ENCODE measurements at regions of chr6 and their contacts with region 1.

Region 1: GRCh38 chr6:10722820-10723566 is at the start of gene TMEM14C:
- H3K4me3 Mint-ChIP-seq: peak within 1 kb of the TSS; percentile 93
- H3K27ac Mint-ChIP-seq: peak within 1 kb of the TSS; percentile 97
- H3K4me1 Mint-ChIP-seq: peaks cover 53% of the 10 kb centered on the region
- H3K27me3 Mint-ChIP-seq: no peaks in the 10 kb centered on the region

Region 2: GRCh38 chr6:10505529-10505928 is 217.5 kb before region 1 on chr6:
- intact Hi-C with region 1: no loop called
- H3K4me3 Mint-ChIP-seq: no peak overlapping the region
- H3K27ac Mint-ChIP-seq: no peak overlapping the region
- H3K4me1 Mint-ChIP-seq: no peaks in the 10 kb centered on the region
- H3K27me3 Mint-ChIP-seq: peaks cover 5% of the 10 kb centered on the region

Region 3: GRCh38 chr6:10747251-10747972 is 24.4 kb after region 1 on chr6 and contains the start of gene TMEM14B:
- intact Hi-C with region 1: loop called (anchors 1 kb)
- H3K4me3 Mint-ChIP-seq: peak within 1 kb of the TSS; percentile 87
- H3K27ac Mint-ChIP-seq: peak within 1 kb of the TSS; percentile 92
- H3K4me1 Mint-ChIP-seq: peaks cover 34% of the 10 kb centered on the region
- H3K27me3 Mint-ChIP-seq: no peaks in the 10 kb centered on the region

Region 4: DNA sequence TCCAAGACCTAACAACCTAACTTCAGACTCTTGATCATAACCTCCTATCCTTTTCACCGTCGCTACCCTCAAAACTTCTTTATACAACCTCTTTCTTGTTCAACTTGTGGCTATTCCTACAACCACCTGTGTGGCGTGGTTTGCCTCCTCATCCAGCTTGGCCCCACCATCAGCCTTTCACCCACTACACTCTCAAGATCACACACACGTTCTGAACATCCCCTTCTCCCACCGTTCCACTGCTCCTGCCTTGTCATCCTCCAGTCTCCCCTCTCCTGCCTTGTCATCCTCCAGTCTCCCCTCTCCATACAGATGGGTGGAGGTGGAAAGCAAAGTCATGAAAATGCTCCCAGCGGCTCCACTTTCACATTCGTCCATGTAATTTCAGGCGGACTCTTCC is 101.3 kb after region 1 on chr6:
- intact Hi-C with region 1: no loop called
- H3K4me3 Mint-ChIP-seq: no peak overlapping the region
- H3K27ac Mint-ChIP-seq: no peak overlapping the region
- H3K4me1 Mint-ChIP-seq: no peaks in the 10 kb centered on the region
- H3K27me3 Mint-ChIP-seq: no peaks in the 10 kb centered on the region